ENCODE measurements at regions of chr5 and their contacts with region 1.

Region 1: DNA sequence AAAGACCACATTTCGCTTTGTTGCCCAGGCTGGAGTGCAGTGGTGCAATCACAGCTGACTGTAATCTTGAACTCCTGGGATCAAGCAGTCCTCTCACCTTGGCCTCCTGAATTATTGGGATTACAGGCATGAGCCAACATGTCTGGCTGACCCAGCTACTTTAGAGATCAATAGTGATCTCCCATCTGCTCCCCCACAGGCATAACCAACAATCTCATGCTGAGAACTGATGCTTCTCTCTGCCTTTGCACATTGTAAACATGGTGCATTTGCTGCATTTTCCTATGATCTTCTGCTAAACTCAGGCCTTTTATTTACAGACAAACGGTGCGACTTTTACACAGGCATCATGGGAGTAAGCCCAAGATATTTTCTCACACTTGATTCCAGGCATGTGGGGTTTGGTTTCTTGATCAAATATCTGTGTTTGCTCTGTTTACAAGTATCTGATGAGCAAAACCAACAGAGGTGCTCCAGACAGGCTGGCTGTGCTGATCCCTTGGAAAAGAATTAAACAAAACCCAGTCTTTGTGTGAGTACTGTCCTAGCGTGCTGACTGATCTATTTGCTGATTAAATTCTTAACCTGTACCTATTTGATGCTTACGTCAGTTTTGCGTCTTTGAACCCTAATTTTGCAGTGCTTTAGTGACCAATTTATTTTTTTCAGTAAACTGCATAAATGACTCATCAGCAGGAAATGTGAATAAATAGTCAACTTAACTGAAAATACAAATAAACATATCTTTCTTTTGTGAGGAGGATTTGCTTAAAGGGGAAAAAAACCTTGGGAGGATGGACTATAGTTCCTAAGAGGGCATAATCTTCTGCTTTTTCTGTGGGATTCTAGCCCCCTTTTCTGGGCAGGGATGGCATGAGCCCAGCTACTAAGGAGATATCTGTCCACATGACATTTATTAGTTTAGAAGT is 191.7 kb upstream of the NR3C1 start:
- DNase-seq: peak; percentile 41 to 46
- H3K4me3 ChIP-seq: no peak overlapping the region
- H3K4me3 Mint-ChIP-seq: peak overlapping the region; percentile 37
- H3K27ac Mint-ChIP-seq: peak overlapping the region; percentile 89
- H3K4me1 ChIP-seq: peaks cover 59% of the 10 kb centered on the region
- H3K4me1 Mint-ChIP-seq: peaks cover 40% of the 10 kb centered on the region
- H3K27me3 ChIP-seq: no peaks in the 10 kb centered on the region
- H3K27me3 Mint-ChIP-seq: no peaks in the 10 kb centered on the region
- CTCF ChIP-seq: no peak

Region 2: DNA sequence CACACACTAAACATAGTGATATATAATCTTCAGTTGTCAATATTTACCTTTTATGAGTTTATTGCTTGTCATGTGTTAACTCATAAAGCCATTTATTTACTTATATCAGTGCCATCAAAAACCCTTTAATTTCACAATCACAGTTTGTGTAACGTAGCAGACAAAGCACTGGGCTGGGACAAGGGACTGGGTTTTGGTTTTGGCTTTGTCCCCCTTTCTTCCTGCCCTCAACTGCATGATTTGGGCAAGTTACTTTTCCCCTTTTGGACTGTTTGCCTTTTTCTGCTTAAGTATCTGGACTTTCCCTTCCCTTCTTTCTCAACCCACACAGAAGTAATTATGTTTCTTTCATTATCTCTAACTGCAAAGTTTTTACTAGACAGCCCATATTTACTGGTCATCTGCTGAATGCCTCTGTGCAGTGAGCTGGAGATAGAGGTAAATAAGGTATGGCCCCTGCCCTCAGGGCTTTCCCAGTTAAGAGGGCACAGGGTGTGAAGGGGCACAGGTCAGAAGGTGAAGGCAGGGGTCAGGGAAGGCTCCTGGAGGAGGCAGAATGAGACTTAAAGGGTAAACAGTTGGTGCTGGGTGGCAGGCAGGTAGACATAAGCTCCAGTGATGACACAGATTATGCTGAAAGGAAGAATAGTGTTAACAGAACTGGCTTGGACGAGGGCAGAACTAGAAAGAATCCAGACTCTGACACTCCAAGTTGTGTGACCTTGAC is 176.9 kb before region 1 on chr5:
- CTCF ChIA-PET with region 1: no interaction called
- POLR2A ChIA-PET with region 1: no interaction called
- intact Hi-C with region 1: loop called (anchors 1 kb)
- DNase-seq: peak; percentile 59 to 73
- H3K4me3 ChIP-seq: no peak overlapping the region
- H3K4me3 Mint-ChIP-seq: peak overlapping the region; percentile 4
- H3K27ac Mint-ChIP-seq: peak overlapping the region; percentile 27
- H3K4me1 ChIP-seq: peaks cover 33% of the 10 kb centered on the region
- H3K4me1 Mint-ChIP-seq: peaks cover 28% of the 10 kb centered on the region
- H3K27me3 ChIP-seq: no peaks in the 10 kb centered on the region
- H3K27me3 Mint-ChIP-seq: no peaks in the 10 kb centered on the region
- CTCF ChIP-seq: no peak

Region 3: GRCh38 chr5:143569213-143570082 is 25.7 kb before region 1 on chr5:
- CTCF ChIA-PET with region 1: interaction called, 3 read pairs
- POLR2A ChIA-PET with region 1: interaction called, 3 read pairs
- intact Hi-C with region 1: loop called (anchors 1 kb)
- DNase-seq: peak; percentile 52 to 60
- H3K4me3 ChIP-seq: no peak overlapping the region
- H3K4me3 Mint-ChIP-seq: peak overlapping the region; percentile 49
- H3K27ac Mint-ChIP-seq: peak overlapping the region; percentile 89
- H3K4me1 ChIP-seq: peaks cover 33% of the 10 kb centered on the region
- H3K4me1 Mint-ChIP-seq: peaks cover 36% of the 10 kb centered on the region
- H3K27me3 ChIP-seq: no peaks in the 10 kb centered on the region
- H3K27me3 Mint-ChIP-seq: no peaks in the 10 kb centered on the region
- CTCF ChIP-seq: no peak

Region 4: DNA sequence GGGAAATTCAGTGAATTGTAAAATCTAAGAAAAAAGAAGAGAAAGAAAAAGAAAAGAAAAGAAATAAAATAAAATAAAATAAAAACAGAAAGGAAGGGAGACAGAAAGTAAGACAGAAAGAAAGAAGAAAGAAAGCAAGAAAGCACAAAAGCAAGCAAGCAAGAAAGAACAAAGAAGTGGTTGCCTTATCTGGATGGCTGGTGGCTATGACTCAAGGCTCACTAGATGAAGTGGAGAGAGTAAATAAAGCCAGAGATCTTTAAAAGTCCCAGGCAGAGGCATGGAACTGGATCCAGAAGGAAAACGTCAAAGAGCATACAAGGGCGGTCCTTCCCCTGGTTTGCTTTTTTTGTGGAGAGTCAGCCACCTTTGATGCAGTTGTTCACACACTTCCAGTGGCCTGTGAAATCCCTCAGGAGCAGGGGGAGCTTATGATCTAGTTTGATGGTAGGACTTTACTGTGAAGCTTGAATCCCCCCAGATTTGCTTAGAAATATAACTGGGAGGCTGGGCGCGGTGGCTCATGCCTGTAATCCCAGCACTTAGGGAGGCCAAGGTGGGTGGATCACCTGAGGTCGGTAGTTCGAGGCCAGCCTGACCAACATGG is 40.1 kb after region 1 on chr5:
- CTCF ChIA-PET with region 1: no interaction called
- POLR2A ChIA-PET with region 1: no interaction called
- intact Hi-C with region 1: loop called (anchors 1 kb)
- DNase-seq: peak; percentile 20 to 46
- H3K4me3 ChIP-seq: no peak overlapping the region
- H3K4me3 Mint-ChIP-seq: no peak overlapping the region
- H3K27ac Mint-ChIP-seq: peak overlapping the region; percentile 28
- H3K4me1 ChIP-seq: peaks cover 54% of the 10 kb centered on the region
- H3K4me1 Mint-ChIP-seq: peaks cover 57% of the 10 kb centered on the region
- H3K27me3 ChIP-seq: no peaks in the 10 kb centered on the region
- H3K27me3 Mint-ChIP-seq: no peaks in the 10 kb centered on the region
- CTCF ChIP-seq: no peak

Region 5: GRCh38 chr5:143673676-143674447 is 78.7 kb after region 1 on chr5:
- CTCF ChIA-PET with region 1: no interaction called
- POLR2A ChIA-PET with region 1: no interaction called
- intact Hi-C with region 1: loop called (anchors 2 kb)
- DNase-seq: peak in 1 of 2 experiments; percentile 35
- H3K4me3 ChIP-seq: no peak overlapping the region
- H3K4me3 Mint-ChIP-seq: peak overlapping the region; percentile 27
- H3K27ac Mint-ChIP-seq: peak overlapping the region; percentile 91
- H3K4me1 ChIP-seq: peaks cover 40% of the 10 kb centered on the region
- H3K4me1 Mint-ChIP-seq: peaks cover 46% of the 10 kb centered on the region
- H3K27me3 ChIP-seq: no peaks in the 10 kb centered on the region
- H3K27me3 Mint-ChIP-seq: no peaks in the 10 kb centered on the region
- CTCF ChIP-seq: no peak

Region 6: GRCh38 chr5:143824851-143825720 is 229.9 kb after region 1 on chr5:
- CTCF ChIA-PET with region 1: no interaction called
- POLR2A ChIA-PET with region 1: no interaction called
- intact Hi-C with region 1: loop called (anchors 5 kb)
- DNase-seq: peak; percentile 79 to 89
- H3K4me3 ChIP-seq: no peak overlapping the region
- H3K4me3 Mint-ChIP-seq: no peak overlapping the region
- H3K27ac Mint-ChIP-seq: no peak overlapping the region
- H3K4me1 ChIP-seq: peaks cover 8% of the 10 kb centered on the region; the same call in 1 of the 2 replicates
- H3K4me1 Mint-ChIP-seq: no peaks in the 10 kb centered on the region
- H3K27me3 ChIP-seq: no peaks in the 10 kb centered on the region
- H3K27me3 Mint-ChIP-seq: no peaks in the 10 kb centered on the region
- CTCF ChIP-seq: peak; percentile 83 to 91